Activated B cell treated with CpG ODN at 0.5 μM for 24 hours (primary cell): ENCODE measurements at regions of chr1 and their contacts with region 1.

Region 1: GRCh38 chr1:206930210-206930798 is 8.6 kb upstream of the FCMR start:
- DNase-seq: peak; percentile 72
- ATAC-seq: peak; percentile 83
- H3K4me3 Mint-ChIP-seq: peak overlapping the region; percentile 79
- H3K27ac Mint-ChIP-seq: peak overlapping the region; percentile 99
- H3K4me1 Mint-ChIP-seq: peaks cover 67% of the 10 kb centered on the region
- H3K27me3 Mint-ChIP-seq: no peaks in the 10 kb centered on the region
- CTCF ChIP-seq: no peak

Region 2: DNA sequence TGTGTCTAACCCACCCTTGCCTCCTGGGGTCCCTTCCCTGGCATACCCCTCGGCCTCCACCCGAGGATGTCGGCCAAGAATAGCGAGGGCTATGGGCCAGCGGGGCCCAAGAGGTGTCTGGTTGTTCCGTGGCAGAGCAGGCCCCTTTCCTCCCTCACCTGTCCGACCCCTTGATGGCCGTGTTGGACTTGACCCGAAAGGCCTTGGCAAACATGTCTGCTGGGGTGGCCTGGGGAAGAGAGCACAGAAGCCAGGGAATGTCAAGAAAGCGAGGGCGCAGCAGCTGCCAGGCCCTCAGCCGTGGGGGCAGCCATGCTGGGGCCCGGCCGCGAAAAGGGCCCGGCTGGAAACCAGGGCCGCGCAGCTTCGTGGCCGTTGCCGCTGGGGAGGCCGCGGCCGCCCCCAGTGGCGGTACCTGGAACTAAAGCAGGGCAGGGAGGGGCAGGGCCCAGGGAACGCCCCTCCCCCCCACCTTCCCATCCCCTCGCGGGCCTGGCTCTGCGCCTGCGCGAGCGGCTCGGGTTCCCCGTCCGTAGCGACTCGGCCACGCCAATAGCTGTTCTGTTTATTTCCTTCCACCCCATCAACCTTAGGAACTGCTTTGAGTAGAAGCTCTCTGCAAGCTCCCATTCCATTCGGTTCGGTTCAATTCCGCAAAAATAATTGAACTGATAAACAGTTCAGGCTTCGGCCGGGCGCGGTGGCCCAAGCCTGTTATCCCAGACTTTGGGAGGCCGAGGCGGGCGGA is 318.0 kb before region 1 on chr1 and contains the start of gene EIF2D:
- CTCF ChIA-PET with region 1: interaction called, 3 read pairs
- POLR2A ChIA-PET with region 1: interaction called, 5 read pairs
- intact Hi-C with region 1: loop called (anchors 2 kb)
- DNase-seq: peak; percentile 95
- ATAC-seq: peak; percentile 98
- H3K4me3 Mint-ChIP-seq: peak within 1 kb of the TSS; percentile 96
- H3K27ac Mint-ChIP-seq: peak within 1 kb of the TSS; percentile 97
- H3K4me1 Mint-ChIP-seq: peaks cover 30% of the 10 kb centered on the region
- H3K27me3 Mint-ChIP-seq: no peaks in the 10 kb centered on the region
- CTCF ChIP-seq: peak; percentile 72
- total RNA-seq, gene EIF2D: 61.2 and 65.4 TPM in 2 replicates

Region 3: DNA sequence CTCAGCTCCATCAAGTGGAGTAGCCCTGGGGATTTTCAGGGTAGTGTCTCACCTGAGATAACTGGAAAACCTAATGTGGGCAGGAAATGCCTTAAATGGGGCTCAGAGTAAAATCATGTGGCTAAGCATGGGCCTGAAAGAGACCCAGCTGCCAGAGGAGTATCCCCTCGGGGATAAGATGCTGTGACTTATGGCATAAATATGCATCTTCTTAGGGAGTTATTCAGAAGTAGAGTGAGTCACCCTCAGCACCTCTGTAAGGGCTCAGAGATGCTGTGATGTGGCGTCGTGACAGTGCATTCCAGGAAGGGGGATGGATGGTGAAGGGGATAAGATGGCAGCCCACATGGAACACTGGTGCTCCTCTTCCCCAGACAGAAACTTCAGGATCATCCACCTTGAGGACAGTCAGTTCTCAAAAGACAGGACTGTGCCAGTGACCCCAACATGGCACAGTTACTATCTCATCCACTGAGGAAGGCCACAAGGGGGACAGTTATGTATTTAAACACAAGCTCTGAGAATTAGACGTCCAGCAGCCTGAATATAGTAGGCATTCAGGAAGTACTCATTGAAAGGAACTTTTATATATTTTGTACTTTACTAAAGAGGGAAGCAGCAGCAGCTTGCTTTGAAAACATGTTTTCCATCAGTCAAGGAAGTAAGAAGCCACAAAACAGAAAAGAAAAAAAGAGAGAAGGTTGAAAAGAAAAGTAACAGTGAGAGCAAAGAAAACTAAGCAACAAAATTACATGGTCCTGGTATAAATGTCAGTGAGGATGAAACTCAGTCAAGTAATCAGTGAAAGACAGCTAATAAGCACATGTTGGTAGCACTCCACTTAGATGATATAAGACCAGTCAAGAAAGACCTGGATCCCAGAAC is 24.8 kb before region 1 on chr1:
- CTCF ChIA-PET with region 1: interaction called, 41 read pairs
- POLR2A ChIA-PET with region 1: interaction called, 22 read pairs
- intact Hi-C with region 1: no loop called
- DNase-seq: no peak
- ATAC-seq: peak; percentile 93
- H3K4me3 Mint-ChIP-seq: peak overlapping the region; percentile 36
- H3K27ac Mint-ChIP-seq: peak overlapping the region; percentile 89
- H3K4me1 Mint-ChIP-seq: peaks cover 77% of the 10 kb centered on the region
- H3K27me3 Mint-ChIP-seq: no peaks in the 10 kb centered on the region
- CTCF ChIP-seq: no peak

Region 4: DNA sequence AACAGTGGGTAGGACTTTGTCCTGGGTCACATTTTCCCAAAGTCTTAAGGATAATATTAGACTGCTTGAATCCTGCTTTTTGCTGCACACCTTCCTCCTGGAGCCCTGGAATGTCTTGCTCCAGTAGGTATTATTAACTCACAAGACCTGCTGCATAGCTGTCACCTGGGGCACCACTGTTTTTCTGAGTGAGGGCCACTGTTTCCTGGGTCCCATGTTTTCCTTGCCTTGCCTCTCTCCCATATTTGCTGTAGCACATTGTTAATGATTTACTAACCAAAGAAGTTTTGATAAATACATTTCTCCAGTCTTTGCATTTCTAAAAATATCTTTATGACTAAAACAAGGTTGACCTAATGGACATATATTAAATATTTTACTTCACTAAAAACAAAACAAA is 62.5 kb after region 1 on chr1:
- CTCF ChIA-PET with region 1: no interaction called
- POLR2A ChIA-PET with region 1: no interaction called
- intact Hi-C with region 1: no loop called
- DNase-seq: no peak
- ATAC-seq: no peak
- H3K4me3 Mint-ChIP-seq: no peak overlapping the region
- H3K27ac Mint-ChIP-seq: no peak overlapping the region
- H3K4me1 Mint-ChIP-seq: no peaks in the 10 kb centered on the region
- H3K27me3 Mint-ChIP-seq: peaks cover 13% of the 10 kb centered on the region
- CTCF ChIP-seq: no peak